ENCODE measurements at regions of chr2 and their contacts with region 1.

Region 1: DNA sequence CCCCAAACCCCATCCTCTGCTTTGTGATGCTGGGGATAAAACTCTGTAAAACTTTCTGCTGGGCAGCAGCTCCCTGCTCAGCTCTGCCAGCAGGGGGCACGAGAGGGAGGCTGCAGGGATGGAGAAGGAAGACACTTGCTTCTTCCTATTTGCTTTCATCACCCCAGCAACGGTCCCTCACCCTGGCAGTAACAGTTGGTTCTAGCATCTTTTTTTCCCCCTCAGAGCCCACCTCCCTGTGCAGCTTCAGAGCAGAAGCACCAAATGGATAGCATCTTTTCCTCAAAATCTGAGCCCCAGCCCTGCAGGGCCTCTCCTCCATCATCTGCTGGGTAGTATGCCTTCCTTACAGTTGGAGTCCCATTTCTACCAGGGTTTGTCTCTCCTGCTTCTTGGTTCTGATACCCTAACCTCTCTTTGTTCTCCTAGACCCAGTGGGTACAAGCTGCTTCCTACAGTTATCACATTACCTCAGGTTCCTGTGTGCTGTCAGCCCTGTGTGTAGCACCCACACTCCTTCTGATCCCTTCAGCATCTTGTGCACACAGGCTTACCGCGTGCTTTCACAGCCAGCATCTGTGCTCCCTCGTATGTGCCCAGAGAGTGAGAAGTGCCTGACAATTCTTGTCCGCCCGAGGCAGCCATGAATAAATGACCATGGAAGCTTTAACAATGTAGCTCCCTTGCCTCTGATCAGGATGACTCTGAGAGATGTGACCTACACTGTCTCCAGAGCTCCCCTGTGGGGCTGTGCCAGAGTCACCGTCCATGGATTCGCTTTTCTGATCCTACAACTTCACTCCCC is 14.5 kb downstream of the CKAP2L start:
- DNase-seq: peak; percentile 79 to 87 (median 80)
- H3K4me3 ChIP-seq: no peak overlapping the region
- H3K4me3 Mint-ChIP-seq: peak overlapping the region in 1 of 2 donors; percentile 4
- H3K27ac ChIP-seq: peak overlapping the region in 1 of 2 donors; percentile 27
- H3K27ac Mint-ChIP-seq: peak overlapping the region; percentile 58 to 92 (median 77)
- H3K4me1 ChIP-seq: peaks cover 10 to 12% of the 10 kb centered on the region in 2 donors
- H3K4me1 Mint-ChIP-seq: peaks cover 14% of the 10 kb centered on the region
- H3K27me3 ChIP-seq: no peaks in the 10 kb centered on the region
- H3K27me3 Mint-ChIP-seq: no peaks in the 10 kb centered on the region
- CTCF ChIP-seq: peak; percentile 95

Region 2: DNA sequence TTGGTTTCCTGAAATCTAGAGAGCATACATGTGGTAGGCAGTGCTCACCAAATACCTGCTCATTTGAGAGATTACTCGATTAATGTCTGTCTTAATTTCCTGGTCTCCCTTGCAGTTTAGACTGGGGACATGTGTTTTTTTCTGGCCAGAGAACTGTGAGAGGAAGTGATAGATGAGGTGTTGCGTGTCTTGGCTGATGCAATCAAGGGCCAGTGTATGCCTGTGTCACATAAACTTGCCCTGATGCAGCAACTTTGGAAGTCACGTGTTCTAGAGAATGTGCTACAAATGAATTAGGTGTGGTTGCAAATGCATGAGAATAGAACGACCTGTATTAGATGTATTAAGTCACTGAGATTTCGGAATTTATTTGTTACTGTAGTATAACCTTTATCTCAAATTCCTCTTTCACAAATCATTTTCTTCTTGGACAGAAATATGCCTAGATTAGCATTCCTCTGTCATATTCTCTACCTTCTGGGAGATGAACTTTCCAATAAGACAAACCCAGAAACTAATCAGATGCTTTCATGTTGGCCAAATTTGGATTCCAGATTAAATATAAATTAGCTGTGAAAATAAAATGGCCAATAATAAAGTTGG is 44.3 kb after region 1 on chr2:
- intact Hi-C with region 1: loop called in 1 of 2 experiments (anchors 5 kb)
- DNase-seq: peak; percentile 97 to 100 (median 99)
- H3K4me3 ChIP-seq: peak overlapping the region in 1 of 3 experiments; percentile 29
- H3K4me3 Mint-ChIP-seq: peak overlapping the region in 1 of 2 donors; percentile 53
- H3K27ac ChIP-seq: peak overlapping the region; percentile 70 to 99
- H3K27ac Mint-ChIP-seq: peak overlapping the region; percentile 95 to 99 (median 97)
- H3K4me1 ChIP-seq: peaks cover 47 to 59% of the 10 kb centered on the region in 2 donors
- H3K4me1 Mint-ChIP-seq: peaks cover 44% of the 10 kb centered on the region
- H3K27me3 ChIP-seq: no peaks in the 10 kb centered on the region
- H3K27me3 Mint-ChIP-seq: peaks cover 2 to 4% (median 4%) of the 10 kb centered on the region in 3 donors
- CTCF ChIP-seq: no peak

Region 3: DNA sequence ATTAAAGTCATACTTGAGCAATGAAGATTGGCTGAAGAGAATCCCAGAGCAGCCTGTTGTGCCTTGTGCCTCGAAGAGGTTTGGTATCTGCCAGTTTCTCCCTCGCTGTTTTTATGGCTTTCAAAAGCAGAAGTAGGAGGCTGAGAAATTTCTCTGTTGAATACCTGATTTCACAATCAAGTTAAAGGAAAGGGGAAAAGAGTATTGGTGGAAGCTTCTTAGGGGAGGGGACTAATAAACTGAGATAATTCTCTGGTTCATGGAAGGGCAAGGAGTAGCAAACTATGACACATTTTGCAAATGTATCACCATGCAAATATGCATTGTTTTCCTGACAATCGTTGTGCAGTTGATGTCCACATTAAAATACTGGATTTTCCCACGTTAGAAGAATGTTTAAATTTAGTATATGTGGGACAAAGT is 86.7 kb after region 1 on chr2 and contains the start of gene IL1B:
- intact Hi-C with region 1: loop called in 1 of 2 experiments (anchors 5 kb)
- DNase-seq: peak; percentile 92 to 96 (median 93)
- H3K4me3 ChIP-seq: peak within 1 kb of the TSS; percentile 40 to 100 (median 91)
- H3K4me3 Mint-ChIP-seq: peak within 1 kb of the TSS; percentile 94 to 98
- H3K27ac ChIP-seq: peak within 1 kb of the TSS; percentile 83 to 94
- H3K27ac Mint-ChIP-seq: peak within 1 kb of the TSS; percentile 96 to 100 (median 99)
- H3K4me1 ChIP-seq: peaks cover 96% of the 10 kb centered on the region in 2 donors
- H3K4me1 Mint-ChIP-seq: peaks cover 96% of the 10 kb centered on the region
- H3K27me3 ChIP-seq: no peaks in the 10 kb centered on the region
- H3K27me3 Mint-ChIP-seq: peaks cover 0 to 9% (median 6%) of the 10 kb centered on the region in 3 donors
- CTCF ChIP-seq: no peak
- polyA plus RNA-seq, gene IL1B: 65.1 to 1,419 (median 114) TPM

Region 4: GRCh38 chr2:112884869-112885505 is 135.0 kb after region 1 on chr2:
- intact Hi-C with region 1: loop called (anchors 5 kb)
- DNase-seq: peak; percentile 70 to 83 (median 81)
- H3K4me3 ChIP-seq: no peak overlapping the region
- H3K4me3 Mint-ChIP-seq: no peak overlapping the region
- H3K27ac ChIP-seq: no peak overlapping the region
- H3K27ac Mint-ChIP-seq: peak overlapping the region in 5 of 7 donors; percentile 35 to 85 (median 61)
- H3K4me1 ChIP-seq: peaks cover 43 to 54% of the 10 kb centered on the region in 2 donors
- H3K4me1 Mint-ChIP-seq: peaks cover 49% of the 10 kb centered on the region
- H3K27me3 ChIP-seq: no peaks in the 10 kb centered on the region
- H3K27me3 Mint-ChIP-seq: peaks cover 0 to 3% (median 0%) of the 10 kb centered on the region in 3 donors
- CTCF ChIP-seq: peak; percentile 97

Region 5: GRCh38 chr2:112941753-112942658 is 192.0 kb after region 1 on chr2:
- intact Hi-C with region 1: loop called (anchors 5 kb)
- DNase-seq: peak; percentile 71 to 84 (median 80)
- H3K4me3 ChIP-seq: no peak overlapping the region
- H3K4me3 Mint-ChIP-seq: no peak overlapping the region
- H3K27ac ChIP-seq: no peak overlapping the region
- H3K27ac Mint-ChIP-seq: no peak overlapping the region
- H3K4me1 ChIP-seq: peaks cover 3 to 5% of the 10 kb centered on the region in 2 donors
- H3K4me1 Mint-ChIP-seq: peaks cover 5% of the 10 kb centered on the region
- H3K27me3 ChIP-seq: no peaks in the 10 kb centered on the region
- H3K27me3 Mint-ChIP-seq: peaks cover 0 to 3% (median 0%) of the 10 kb centered on the region in 3 donors
- CTCF ChIP-seq: peak; percentile 95